ENCODE measurements at regions of chr13 and their contacts with region 1.

Region 1: GRCh38 chr13:45310341-45311125 is 30.4 kb downstream of the TPT1 start:
- DNase-seq: no peak
- ATAC-seq: no peak

Region 2: DNA sequence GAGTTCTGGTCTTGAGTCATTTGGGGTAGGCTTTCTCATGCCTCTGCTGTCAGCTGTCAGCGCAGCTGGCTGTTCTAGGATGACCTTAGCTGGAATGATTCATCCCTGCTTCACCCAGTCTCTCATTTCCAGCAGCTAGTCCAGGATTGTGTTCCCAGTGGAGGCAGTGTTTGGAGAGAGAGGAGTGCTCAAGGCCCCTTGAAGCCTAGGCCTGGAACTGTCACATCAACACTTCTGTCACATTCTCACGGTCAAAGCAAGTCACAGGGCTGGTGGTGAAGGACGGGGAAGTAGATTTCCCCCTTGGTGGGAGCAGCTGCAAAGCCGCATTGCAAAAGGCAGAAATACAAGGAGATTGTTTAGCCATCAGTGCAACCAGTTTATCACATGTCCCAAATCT is 15.3 kb after region 1 on chr13:
- intact Hi-C with region 1: no loop called
- DNase-seq: peak; percentile 81
- ATAC-seq: peak; percentile 94

Region 3: GRCh38 chr13:45340422-45340925 is 29.9 kb after region 1 on chr13:
- intact Hi-C with region 1: loop called (anchors 2 kb)
- DNase-seq: peak; percentile 93
- ATAC-seq: peak; percentile 79

Region 4: DNA sequence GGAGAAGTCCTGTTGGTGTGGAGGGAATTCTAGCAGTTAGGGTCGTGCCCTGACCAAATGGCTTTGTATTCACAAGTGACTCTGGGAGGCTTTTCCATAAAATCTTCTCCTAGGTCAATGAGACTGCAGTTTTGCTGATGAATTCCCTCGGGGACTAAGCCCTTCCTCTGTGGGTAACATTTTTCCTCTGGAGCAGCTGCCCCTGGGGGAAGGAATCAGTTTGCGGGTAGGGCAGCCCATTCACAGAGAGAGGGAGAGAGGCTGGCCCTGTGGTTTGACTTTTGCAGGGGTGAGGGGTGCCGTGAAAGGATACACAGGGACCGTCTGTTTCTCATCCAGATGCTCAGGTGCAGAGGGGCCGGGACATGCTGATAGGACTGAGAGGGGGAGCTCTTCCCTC is 237.7 kb after region 1 on chr13:
- intact Hi-C with region 1: no loop called
- DNase-seq: no peak
- ATAC-seq: no peak

Region 5: GRCh38 chr13:45623515-45624090 is 313.1 kb after region 1 on chr13:
- intact Hi-C with region 1: no loop called
- DNase-seq: no peak
- ATAC-seq: no peak